ENCODE measurements at regions of chr15 and their contacts with region 1.

Region 1: GRCh38 chr15:38690689-38691332 is 126.2 kb upstream of the RASGRP1 start:
- DNase-seq: peak; percentile 63 to 90 (median 83)
- ATAC-seq: peak; percentile 44
- H3K4me3 ChIP-seq: no peak overlapping the region
- H3K4me3 Mint-ChIP-seq: no peak overlapping the region
- H3K27ac ChIP-seq: no peak overlapping the region
- H3K27ac Mint-ChIP-seq: peak overlapping the region; percentile 91
- H3K4me1 ChIP-seq: peaks cover 58% of the 10 kb centered on the region
- H3K4me1 Mint-ChIP-seq: peaks cover 68% of the 10 kb centered on the region
- H3K27me3 ChIP-seq: no peaks in the 10 kb centered on the region
- H3K27me3 Mint-ChIP-seq: no peaks in the 10 kb centered on the region
- CTCF ChIP-seq: peak; percentile 92

Region 2: DNA sequence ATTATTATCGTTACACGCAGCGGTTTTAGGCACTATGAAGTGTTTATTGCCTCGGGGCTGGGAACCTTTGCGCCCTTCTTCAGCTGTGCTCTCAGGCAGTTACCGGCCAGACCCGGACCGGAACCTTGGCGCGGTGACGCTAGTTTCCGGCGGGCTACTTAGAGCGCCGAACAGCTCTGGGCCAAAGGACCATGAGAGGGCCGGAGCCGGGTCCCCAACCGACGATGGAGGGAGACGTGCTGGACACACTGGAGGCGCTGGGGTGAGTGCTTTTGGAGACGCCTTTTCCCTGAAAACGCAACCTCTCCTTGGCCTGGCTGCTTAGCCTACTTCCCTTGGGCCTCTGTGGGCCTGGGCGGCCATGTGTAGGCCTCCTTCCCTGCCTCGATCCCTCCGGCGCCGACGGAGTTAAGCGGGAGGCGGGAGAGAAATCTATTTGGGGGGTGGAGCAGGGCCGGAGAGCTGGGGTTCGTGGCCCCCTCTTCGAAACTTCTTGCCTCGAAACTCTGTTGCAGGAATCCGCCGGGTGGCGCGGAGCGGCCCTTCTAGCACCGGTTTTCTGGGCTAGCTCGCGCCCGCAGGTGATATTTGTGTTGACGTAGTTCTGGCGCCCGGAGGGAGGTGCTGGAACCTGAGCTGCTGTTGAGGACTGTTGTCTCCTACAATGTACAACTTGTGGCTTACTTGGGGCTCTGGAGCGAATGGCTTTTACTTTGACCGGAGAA is 236.7 kb before region 1 on chr15 and contains the start of gene FAM98B:
- CTCF ChIA-PET with region 1: interaction called, 15 read pairs
- POLR2A ChIA-PET with region 1: interaction called, 13 read pairs
- intact Hi-C with region 1: no loop called
- DNase-seq: peak; percentile 80 to 95 (median 87)
- ATAC-seq: peak; percentile 89
- H3K4me3 ChIP-seq: peak within 1 kb of the TSS; percentile 84 to 87
- H3K4me3 Mint-ChIP-seq: peak within 1 kb of the TSS; percentile 98
- H3K27ac ChIP-seq: peak within 1 kb of the TSS; percentile 79 to 88
- H3K27ac Mint-ChIP-seq: peak within 1 kb of the TSS; percentile 99
- H3K4me1 ChIP-seq: peaks cover 19% of the 10 kb centered on the region
- H3K4me1 Mint-ChIP-seq: peaks cover 39% of the 10 kb centered on the region
- H3K27me3 ChIP-seq: no peaks in the 10 kb centered on the region
- H3K27me3 Mint-ChIP-seq: no peaks in the 10 kb centered on the region
- CTCF ChIP-seq: no peak
- total RNA-seq, gene FAM98B: 18.4 to 19.4 TPM

Region 3: DNA sequence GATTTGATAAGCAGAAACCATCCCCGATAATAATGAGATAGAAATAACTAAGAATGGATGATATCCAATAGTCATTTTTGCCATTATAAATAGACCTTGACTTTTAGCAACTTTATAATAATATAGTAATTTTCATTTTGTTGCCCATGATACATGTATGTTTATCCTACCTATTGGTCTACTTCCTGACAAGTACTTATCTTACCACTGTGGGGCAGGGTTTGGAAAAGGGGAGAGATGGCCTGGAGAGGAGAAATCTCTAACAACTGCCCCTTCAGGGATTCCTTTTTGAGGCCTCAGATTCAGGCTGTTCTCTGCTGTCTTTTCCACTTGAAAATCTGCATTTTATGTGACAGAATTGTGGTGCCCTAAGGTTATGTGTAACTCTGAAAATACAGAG is 194.7 kb before region 1 on chr15:
- CTCF ChIA-PET with region 1: interaction called, 13 read pairs
- POLR2A ChIA-PET with region 1: interaction called, 6 read pairs
- intact Hi-C with region 1: no loop called
- DNase-seq: no peak
- ATAC-seq: no peak
- H3K4me3 ChIP-seq: no peak overlapping the region
- H3K4me3 Mint-ChIP-seq: no peak overlapping the region
- H3K27ac ChIP-seq: peak overlapping the region in 1 of 2 experiments; percentile 11
- H3K27ac Mint-ChIP-seq: peak overlapping the region; percentile 69
- H3K4me1 ChIP-seq: no peaks in the 10 kb centered on the region
- H3K4me1 Mint-ChIP-seq: peaks cover 15% of the 10 kb centered on the region
- H3K27me3 ChIP-seq: no peaks in the 10 kb centered on the region
- H3K27me3 Mint-ChIP-seq: no peaks in the 10 kb centered on the region
- CTCF ChIP-seq: no peak

Region 4: GRCh38 chr15:38521316-38521715 is 169.5 kb before region 1 on chr15:
- CTCF ChIA-PET with region 1: interaction called, 25 read pairs
- POLR2A ChIA-PET with region 1: interaction called, 4 read pairs
- intact Hi-C with region 1: no loop called
- DNase-seq: no peak
- ATAC-seq: no peak
- H3K4me3 ChIP-seq: no peak overlapping the region
- H3K4me3 Mint-ChIP-seq: no peak overlapping the region
- H3K27ac ChIP-seq: no peak overlapping the region
- H3K27ac Mint-ChIP-seq: peak overlapping the region; percentile 83
- H3K4me1 ChIP-seq: peaks cover 5% of the 10 kb centered on the region
- H3K4me1 Mint-ChIP-seq: peaks cover 56% of the 10 kb centered on the region
- H3K27me3 ChIP-seq: no peaks in the 10 kb centered on the region
- H3K27me3 Mint-ChIP-seq: no peaks in the 10 kb centered on the region
- CTCF ChIP-seq: no peak

Region 5: DNA sequence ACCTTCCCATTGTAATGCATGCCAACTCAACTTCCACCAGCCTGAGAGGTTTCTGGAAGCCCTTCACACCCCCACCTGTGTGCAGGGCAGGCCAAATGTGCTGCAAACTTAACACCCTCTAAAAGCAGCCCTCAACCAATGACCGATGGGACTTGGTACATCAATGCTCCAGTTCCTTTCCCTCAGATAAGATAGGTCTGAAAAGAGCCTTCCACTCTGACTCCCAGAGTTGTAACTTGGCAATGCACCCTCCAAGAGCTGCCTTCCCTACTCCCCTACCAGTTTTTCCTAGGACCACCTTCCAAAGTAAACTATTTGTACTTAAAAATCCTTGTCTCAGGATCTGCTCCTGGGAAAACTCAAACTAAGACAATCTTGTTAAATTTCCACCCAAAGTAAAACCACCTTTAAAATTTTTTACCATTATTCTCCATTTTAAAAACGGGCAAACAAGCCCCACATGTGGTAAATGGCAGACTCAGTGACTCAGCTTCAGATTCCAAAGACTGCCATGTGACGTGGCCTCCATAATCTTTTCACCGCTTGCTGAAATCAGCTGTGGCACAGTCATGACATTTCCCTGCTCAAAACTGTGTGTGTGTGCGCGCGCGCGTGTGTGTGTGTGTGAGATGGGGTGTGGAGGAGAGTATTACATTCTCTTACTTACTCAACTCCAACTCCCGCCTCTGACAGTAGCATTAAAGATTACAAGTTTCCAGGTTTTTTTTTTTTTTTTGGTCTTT is 143.4 kb before region 1 on chr15:
- CTCF ChIA-PET with region 1: interaction called, 80 read pairs
- POLR2A ChIA-PET with region 1: interaction called, 4 read pairs
- intact Hi-C with region 1: no loop called
- DNase-seq: peak in 1 of 9 experiments; percentile 44
- ATAC-seq: no peak
- H3K4me3 ChIP-seq: no peak overlapping the region
- H3K4me3 Mint-ChIP-seq: no peak overlapping the region
- H3K27ac ChIP-seq: peak overlapping the region in 1 of 2 experiments; percentile 25
- H3K27ac Mint-ChIP-seq: peak overlapping the region; percentile 68
- H3K4me1 ChIP-seq: peaks cover 77% of the 10 kb centered on the region
- H3K4me1 Mint-ChIP-seq: peaks cover 82% of the 10 kb centered on the region
- H3K27me3 ChIP-seq: no peaks in the 10 kb centered on the region
- H3K27me3 Mint-ChIP-seq: no peaks in the 10 kb centered on the region
- CTCF ChIP-seq: no peak

Region 6: GRCh38 chr15:38610748-38611147 is 80.1 kb before region 1 on chr15:
- CTCF ChIA-PET with region 1: interaction called, 10 read pairs
- POLR2A ChIA-PET with region 1: no interaction called
- intact Hi-C with region 1: no loop called
- DNase-seq: peak in 3 of 9 experiments; percentile 28 to 53 (median 28)
- ATAC-seq: peak; percentile 78
- H3K4me3 ChIP-seq: no peak overlapping the region
- H3K4me3 Mint-ChIP-seq: peak overlapping the region; percentile 13
- H3K27ac ChIP-seq: peak overlapping the region in 1 of 2 experiments; percentile 69
- H3K27ac Mint-ChIP-seq: peak overlapping the region; percentile 93
- H3K4me1 ChIP-seq: peaks cover 41% of the 10 kb centered on the region
- H3K4me1 Mint-ChIP-seq: peaks cover 54% of the 10 kb centered on the region
- H3K27me3 ChIP-seq: no peaks in the 10 kb centered on the region
- H3K27me3 Mint-ChIP-seq: no peaks in the 10 kb centered on the region
- CTCF ChIP-seq: no peak

Region 7: DNA sequence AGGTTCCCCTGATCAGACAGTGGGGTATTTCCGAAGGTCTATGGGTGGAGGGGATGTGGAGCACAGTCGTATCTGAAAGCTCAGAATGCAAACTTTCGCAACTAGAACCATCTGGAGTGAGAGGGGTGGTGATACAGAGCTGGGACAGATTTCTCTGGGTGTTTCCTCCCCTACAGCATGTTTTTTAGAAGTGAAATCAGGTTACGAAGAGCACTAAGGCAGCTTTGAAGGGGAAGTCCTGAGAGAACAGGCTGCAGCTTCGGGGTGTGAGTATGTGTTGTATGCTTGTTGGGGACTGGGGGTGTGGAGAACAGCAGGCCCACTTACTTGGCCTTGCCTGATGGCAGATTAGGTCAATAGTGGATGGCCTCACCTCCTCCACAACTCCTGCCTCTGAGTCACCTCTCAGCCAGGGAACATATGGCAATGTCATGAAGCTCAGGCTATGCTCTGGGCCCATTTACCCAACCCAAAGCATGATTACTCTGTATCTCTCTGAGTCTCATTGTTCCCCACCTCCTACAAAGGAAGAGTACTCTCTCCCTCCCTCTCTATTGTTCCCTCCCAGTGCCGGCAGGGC is 19.0 kb before region 1 on chr15:
- CTCF ChIA-PET with region 1: interaction called, 292 read pairs
- POLR2A ChIA-PET with region 1: interaction called, 16 read pairs
- intact Hi-C with region 1: loop called in 1 of 2 experiments (anchors 1 kb)
- DNase-seq: peak in 6 of 9 experiments; percentile 39 to 91 (median 64)
- ATAC-seq: peak; percentile 61
- H3K4me3 ChIP-seq: peak overlapping the region in 1 of 2 experiments; percentile 3
- H3K4me3 Mint-ChIP-seq: peak overlapping the region; percentile 61
- H3K27ac ChIP-seq: peak overlapping the region; percentile 70 to 84
- H3K27ac Mint-ChIP-seq: peak overlapping the region; percentile 97
- H3K4me1 ChIP-seq: peaks cover 77% of the 10 kb centered on the region
- H3K4me1 Mint-ChIP-seq: peaks cover 77% of the 10 kb centered on the region
- H3K27me3 ChIP-seq: no peaks in the 10 kb centered on the region
- H3K27me3 Mint-ChIP-seq: no peaks in the 10 kb centered on the region
- CTCF ChIP-seq: no peak

Region 8: GRCh38 chr15:38745126-38745525 is 54.3 kb after region 1 on chr15:
- CTCF ChIA-PET with region 1: no interaction called
- POLR2A ChIA-PET with region 1: no interaction called
- intact Hi-C with region 1: no loop called
- DNase-seq: no peak
- ATAC-seq: no peak
- H3K4me3 ChIP-seq: no peak overlapping the region
- H3K4me3 Mint-ChIP-seq: no peak overlapping the region
- H3K27ac ChIP-seq: no peak overlapping the region
- H3K27ac Mint-ChIP-seq: no peak overlapping the region
- H3K4me1 ChIP-seq: no peaks in the 10 kb centered on the region
- H3K4me1 Mint-ChIP-seq: no peaks in the 10 kb centered on the region
- H3K27me3 ChIP-seq: no peaks in the 10 kb centered on the region
- H3K27me3 Mint-ChIP-seq: peaks cover 5% of the 10 kb centered on the region
- CTCF ChIP-seq: no peak